Left cardiac atrium (tissue), 4 donors: ENCODE measurements at regions of chr1 and their contacts with region 1.

Region 1: DNA sequence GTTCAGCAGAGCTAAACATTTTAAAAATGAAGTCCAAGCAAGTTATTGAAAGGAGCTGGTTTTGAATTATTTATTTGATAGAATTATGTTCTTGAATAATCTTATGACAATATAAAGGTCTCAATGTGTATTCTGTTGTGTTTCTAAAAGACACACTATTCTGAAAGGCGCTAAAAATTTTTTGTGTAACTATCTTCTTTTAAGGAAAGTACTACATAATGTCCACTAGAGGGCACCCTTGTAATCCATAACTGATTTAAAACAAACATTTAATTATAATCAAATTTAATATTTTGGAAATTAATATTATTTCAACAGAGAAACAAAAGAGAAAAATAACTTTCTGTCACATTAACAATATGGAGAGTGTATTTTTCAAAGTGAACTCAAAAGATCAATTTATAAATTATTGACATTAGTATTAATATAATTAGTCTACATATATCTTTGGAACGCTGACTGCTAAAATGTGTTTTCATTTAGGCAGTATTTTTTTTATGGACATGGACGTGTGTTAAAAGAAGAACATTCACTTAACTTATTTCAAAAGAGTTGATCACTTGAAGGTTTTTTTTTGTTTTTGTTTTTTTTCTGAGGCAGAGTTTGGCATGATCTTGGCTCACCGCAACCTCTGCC is 248.4 kb downstream of the DENND1B start:
- DNase-seq: no peak
- ATAC-seq: no peak

Region 2: DNA sequence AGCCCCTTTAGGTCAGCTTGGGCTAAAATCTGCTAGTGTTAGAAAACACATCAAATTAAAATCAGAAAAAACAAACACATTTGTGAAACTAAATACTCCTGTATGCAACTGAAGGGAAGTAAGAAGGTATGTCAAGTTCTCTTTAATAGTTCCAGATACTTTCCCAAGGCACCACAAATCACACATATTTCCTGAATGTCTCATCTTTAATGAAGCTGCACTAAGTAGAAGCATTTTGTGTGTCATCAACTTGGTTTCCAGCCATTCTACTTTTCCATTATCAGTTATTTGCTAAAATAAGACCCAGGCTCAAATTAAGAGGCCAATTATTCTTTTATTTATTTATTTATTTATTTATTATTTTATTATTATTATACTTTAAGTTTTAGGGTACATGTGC is 224.1 kb before region 1 on chr1:
- intact Hi-C with region 1: no loop called
- DNase-seq: no peak
- ATAC-seq: no peak

Region 3: GRCh38 chr1:197868751-197869489 is 342.1 kb after region 1 on chr1:
- intact Hi-C with region 1: loop called in 1 of 2 experiments (anchors 5 kb)
- DNase-seq: no peak
- ATAC-seq: peak; percentile 86 to 89